ENCODE measurements at regions of chr3 and their contacts with region 1.

Region 1: DNA sequence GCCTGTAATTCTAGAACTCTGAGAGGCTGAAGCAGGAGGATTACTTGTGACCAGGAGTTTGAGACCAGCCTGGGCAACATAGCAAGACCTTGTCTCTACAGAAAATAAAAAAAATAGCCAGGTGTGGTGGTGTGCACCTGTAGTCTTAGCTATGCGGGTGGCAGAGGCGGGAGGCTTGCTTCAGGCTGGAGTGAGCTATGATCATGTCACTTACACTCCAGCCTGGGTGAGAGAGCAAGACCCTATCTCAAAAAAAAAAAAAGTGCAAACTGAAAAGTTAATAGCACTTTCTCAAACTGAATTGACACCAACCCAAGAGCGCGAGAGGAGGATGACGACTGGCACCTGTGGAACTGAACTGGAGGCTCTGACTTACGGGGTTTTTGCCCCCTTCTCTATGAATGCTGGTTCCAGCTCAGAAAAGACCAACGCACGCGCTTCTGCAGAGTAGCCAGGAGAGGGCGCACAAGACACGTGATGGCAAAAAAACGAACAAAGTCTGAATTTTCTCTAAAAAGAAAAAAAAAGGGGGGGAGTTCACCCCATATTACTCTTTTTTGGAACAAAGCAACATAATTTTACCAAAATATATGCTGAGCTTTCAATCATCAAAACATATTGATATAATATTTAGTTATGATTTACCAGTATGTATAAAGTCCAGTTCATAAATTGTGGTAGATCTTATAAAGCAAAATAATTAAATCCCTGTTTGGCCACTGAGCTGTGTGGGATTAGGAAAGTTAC is 23.7 kb downstream of the CFAP92 start:
- DNase-seq: peak; percentile 52
- ATAC-seq: peak; percentile 62

Region 2: DNA sequence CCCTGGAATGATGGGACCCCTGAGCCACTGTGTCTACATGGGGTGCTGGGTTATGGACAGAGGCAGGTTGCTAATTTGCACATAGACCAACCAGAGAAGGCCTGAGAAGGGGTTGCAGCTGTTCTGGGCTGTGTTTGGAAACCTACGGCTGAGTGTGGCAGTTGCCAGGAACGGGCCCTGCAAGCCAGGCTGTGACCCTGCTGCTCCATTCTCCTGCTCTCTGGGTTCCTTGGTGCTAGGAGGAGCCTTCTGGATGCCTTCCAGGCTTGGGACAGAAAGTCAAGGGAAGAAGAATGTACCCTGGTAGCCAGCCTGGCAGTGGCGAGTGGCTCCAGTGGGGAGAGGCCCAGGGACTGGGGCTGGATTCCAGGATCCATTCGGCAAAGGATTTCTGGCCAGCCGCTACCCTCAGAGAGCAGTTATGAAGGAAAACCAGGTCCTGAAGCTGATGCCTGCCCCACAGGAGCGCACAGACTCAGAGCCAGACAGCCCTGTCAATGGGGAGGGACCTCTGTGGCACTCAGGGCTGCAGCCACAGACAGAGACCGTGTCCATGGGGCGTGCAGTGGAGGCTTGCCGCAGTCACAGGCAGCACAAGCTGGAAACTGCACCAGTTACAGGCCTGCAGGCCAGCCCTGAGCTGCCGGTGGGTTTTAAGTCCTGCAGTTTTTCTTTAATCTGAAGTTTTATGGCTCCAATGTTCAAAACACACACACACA is 145.9 kb before region 1 on chr3:
- intact Hi-C with region 1: no loop called
- DNase-seq: no peak
- ATAC-seq: peak; percentile 45

Region 3: DNA sequence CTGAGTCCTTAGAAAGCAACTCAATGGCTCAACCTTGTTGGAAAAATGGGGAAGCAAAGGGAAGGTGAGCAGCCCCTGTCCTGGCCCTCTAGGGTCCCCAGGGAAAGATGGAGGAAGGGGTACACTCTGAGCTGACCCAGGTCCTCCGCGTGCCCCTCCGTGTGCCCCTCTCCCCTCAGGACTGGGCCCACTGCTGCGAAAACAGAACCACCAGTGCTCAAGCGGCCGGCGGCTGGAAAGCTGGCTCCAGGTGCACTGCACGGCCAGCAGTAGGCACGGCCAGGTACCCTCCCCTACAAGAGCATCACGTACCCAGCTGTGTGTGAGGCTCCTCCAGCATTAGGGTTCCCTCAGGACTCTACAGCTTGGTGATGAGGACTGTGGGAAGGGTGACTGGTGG is 125.1 kb after region 1 on chr3:
- intact Hi-C with region 1: loop called (anchors 10 kb)
- DNase-seq: no peak
- ATAC-seq: no peak

Region 4: GRCh38 chr3:129105862-129106261 is 135.7 kb after region 1 on chr3:
- intact Hi-C with region 1: no loop called
- DNase-seq: no peak
- ATAC-seq: no peak

Region 5: DNA sequence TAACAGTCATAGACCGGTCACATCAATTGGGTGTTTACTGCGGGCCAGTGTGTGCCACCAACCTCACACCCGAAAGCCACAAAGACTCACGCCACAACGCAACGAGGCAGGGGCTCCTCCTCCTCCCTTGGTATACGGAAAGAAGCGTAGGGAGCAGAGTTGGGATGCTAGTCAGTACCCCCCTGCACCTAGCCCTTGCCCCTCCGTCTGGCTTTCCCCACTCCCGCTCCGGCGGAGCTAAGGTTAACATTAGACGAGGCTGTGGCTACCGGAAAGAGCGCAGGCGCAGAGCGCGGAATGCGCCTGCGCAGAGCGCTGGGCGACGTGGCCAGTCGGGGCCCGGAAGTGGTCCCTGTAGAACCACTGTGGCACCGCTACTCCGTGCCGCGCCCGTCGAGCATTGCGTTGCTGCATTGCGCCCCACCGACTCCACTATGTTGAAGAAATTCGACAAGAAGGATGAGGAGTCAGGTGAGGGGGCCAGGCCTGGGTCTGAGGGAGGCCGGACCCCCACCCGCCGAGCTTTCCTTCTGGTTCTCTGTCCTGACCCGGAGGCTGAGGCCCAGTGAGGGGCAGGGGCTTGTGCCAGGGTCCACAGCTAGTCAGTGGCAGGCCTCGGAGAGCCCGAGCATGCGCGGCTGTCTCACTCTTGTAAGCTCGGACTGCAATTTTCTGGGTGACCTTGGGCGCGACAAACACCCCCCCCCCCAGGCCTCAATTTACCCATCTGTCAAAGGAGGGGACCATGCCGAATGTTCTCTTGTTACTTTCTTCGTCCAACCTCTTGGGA is 279.3 kb after region 1 on chr3 and contains the start of gene COPG1:
- intact Hi-C with region 1: loop called (anchors 10 kb)
- DNase-seq: peak; percentile 94
- ATAC-seq: peak; percentile 97
- total RNA-seq, gene COPG1: 80.6 TPM

Region 6: GRCh38 chr3:129316131-129317013 is 346.2 kb after region 1 on chr3:
- intact Hi-C with region 1: loop called (anchors 10 kb)
- DNase-seq: peak; percentile 91
- ATAC-seq: peak; percentile 74